ENCODE measurements at regions of chr2 and their contacts with region 1.

Region 1: GRCh38 chr2:55843096-55843993 is 80.2 kb downstream of the EFEMP1 start:
- DNase-seq: peak; percentile 39 to 96
- H3K4me3 ChIP-seq: 0 out of 2 replicates have a peak overlapping the region, but pooled peaks have one; percentile 6
- H3K27ac ChIP-seq: peak overlapping the region; percentile 70
- H3K4me1 ChIP-seq: peaks cover 67% of the 10 kb centered on the region
- H3K27me3 ChIP-seq: no peaks in the 10 kb centered on the region
- CTCF ChIP-seq: no peak

Region 2: GRCh38 chr2:55761526-55761925 is 81.8 kb before region 1 on chr2:
- CTCF ChIA-PET with region 1: no interaction called
- POLR2A ChIA-PET with region 1: no interaction called
- intact Hi-C with region 1: no loop called
- DNase-seq: no peak
- H3K4me3 ChIP-seq: no peak overlapping the region
- H3K27ac ChIP-seq: no peak overlapping the region
- H3K4me1 ChIP-seq: no peaks in the 10 kb centered on the region
- H3K27me3 ChIP-seq: no peaks in the 10 kb centered on the region
- CTCF ChIP-seq: no peak

Region 3: GRCh38 chr2:55885129-55885943 is 42.0 kb after region 1 on chr2:
- CTCF ChIA-PET with region 1: no interaction called
- POLR2A ChIA-PET with region 1: no interaction called
- intact Hi-C with region 1: loop called (anchors 1 kb)
- DNase-seq: peak; percentile 26 to 72
- H3K4me3 ChIP-seq: no peak overlapping the region
- H3K27ac ChIP-seq: peak overlapping the region; percentile 37
- H3K4me1 ChIP-seq: peaks cover 14% of the 10 kb centered on the region
- H3K27me3 ChIP-seq: no peaks in the 10 kb centered on the region
- CTCF ChIP-seq: no peak

Region 4: GRCh38 chr2:55923091-55923981 is 80.0 kb after region 1 on chr2 and contains the start of gene EFEMP1:
- CTCF ChIA-PET with region 1: no interaction called
- POLR2A ChIA-PET with region 1: no interaction called
- intact Hi-C with region 1: loop called (anchors 2 kb)
- DNase-seq: peak; percentile 56 to 80
- H3K4me3 ChIP-seq: peak within 1 kb of the TSS; percentile 62
- H3K27ac ChIP-seq: no peak within 1 kb of the TSS
- H3K4me1 ChIP-seq: peaks cover 6% of the 10 kb centered on the region; the same call in 1 of the 2 replicates
- H3K27me3 ChIP-seq: peaks cover 22% of the 10 kb centered on the region; the same call in 1 of the 2 replicates
- CTCF ChIP-seq: no peak
- total RNA-seq, gene EFEMP1: 61.3 and 86.3 TPM in 2 replicates

Region 5: GRCh38 chr2:56009758-56010458 is 166.6 kb after region 1 on chr2:
- CTCF ChIA-PET with region 1: no interaction called
- POLR2A ChIA-PET with region 1: no interaction called
- intact Hi-C with region 1: loop called (anchors 1 kb)
- DNase-seq: peak in 1 of 2 experiments; percentile 63
- H3K4me3 ChIP-seq: no peak overlapping the region
- H3K27ac ChIP-seq: no peak overlapping the region
- H3K4me1 ChIP-seq: no peaks in the 10 kb centered on the region
- H3K27me3 ChIP-seq: no peaks in the 10 kb centered on the region
- CTCF ChIP-seq: peak; percentile 89